Gastrocnemius medialis (tissue), 4 donors: ENCODE measurements at regions of chr17 and their contacts with region 1.

Region 1: DNA sequence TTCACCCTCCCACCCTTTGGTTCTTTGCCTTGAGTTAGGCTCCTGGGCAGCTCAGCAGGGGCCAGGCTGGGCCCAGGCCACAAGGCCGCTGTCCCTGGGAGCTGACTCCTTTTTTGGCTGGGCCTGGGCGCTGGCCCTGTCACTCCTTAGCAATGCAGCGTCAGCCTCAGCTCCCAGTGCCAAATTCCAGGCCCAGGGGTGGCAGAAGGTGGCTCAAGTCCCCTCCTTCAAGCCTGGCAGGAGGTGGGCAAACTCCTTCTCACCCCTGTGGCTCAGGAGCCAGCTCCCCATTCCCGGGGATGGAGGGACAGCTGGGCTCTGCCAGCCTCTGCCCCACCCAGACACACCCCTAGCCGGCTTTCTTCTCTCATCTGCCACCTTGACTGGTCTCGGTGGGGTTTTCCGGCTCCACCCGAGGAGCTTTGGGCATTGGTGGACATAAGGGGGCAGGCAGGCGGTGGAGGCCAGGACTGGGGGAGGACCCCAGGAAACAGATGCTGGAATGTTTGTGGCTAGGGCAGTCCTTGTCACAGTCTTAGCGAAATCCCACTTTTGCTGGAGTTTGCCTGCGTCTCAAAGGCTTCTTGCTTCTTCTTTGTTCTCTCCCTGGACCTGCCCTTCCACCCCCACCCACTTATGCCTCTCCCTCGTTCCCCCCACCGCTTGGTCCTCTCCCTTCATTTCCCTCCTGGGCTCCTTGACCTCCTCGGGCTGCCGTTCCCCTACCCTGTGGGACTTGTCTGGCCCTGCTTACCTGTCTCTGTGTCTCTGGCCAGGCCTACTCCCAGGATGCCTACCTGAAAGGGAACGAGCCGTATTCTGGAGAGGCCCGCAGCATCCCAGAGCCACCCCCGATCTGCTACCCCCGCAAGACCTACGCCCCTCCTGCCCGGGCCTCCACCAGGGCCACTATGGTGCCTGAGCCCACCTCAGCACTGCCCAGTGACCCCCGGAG is 37.4 kb downstream of the ARHGAP23 start:
- DNase-seq: peak; percentile 36 to 83
- ATAC-seq: peak; percentile 77 to 79
- H3K4me3 ChIP-seq: peak overlapping the region; percentile 46 to 59 (median 50)
- H3K27ac ChIP-seq: peak overlapping the region; percentile 85 to 91 (median 87)
- H3K4me1 ChIP-seq: peaks cover 37 to 41% of the 10 kb centered on the region in 2 donors
- H3K27me3 ChIP-seq: no peaks in the 10 kb centered on the region
- CTCF ChIP-seq: no peak
- POLR2A ChIP-seq: no peak

Region 2: GRCh38 chr17:38449364-38449763 is 16.3 kb before region 1 on chr17:
- in situ Hi-C with region 1: no loop called
- intact Hi-C with region 1: loop called (anchors 2 kb)
- DNase-seq: no peak
- ATAC-seq: no peak
- H3K4me3 ChIP-seq: no peak overlapping the region
- H3K27ac ChIP-seq: peak overlapping the region in 1 of 4 donors; percentile 67
- H3K4me1 ChIP-seq: peaks cover 16 to 39% of the 10 kb centered on the region in 2 donors
- H3K27me3 ChIP-seq: no peaks in the 10 kb centered on the region
- CTCF ChIP-seq: no peak
- POLR2A ChIP-seq: no peak